Posterior vena cava (tissue), 2 donors: ENCODE measurements at regions of chr17 and their contacts with region 1.

Region 1: DNA sequence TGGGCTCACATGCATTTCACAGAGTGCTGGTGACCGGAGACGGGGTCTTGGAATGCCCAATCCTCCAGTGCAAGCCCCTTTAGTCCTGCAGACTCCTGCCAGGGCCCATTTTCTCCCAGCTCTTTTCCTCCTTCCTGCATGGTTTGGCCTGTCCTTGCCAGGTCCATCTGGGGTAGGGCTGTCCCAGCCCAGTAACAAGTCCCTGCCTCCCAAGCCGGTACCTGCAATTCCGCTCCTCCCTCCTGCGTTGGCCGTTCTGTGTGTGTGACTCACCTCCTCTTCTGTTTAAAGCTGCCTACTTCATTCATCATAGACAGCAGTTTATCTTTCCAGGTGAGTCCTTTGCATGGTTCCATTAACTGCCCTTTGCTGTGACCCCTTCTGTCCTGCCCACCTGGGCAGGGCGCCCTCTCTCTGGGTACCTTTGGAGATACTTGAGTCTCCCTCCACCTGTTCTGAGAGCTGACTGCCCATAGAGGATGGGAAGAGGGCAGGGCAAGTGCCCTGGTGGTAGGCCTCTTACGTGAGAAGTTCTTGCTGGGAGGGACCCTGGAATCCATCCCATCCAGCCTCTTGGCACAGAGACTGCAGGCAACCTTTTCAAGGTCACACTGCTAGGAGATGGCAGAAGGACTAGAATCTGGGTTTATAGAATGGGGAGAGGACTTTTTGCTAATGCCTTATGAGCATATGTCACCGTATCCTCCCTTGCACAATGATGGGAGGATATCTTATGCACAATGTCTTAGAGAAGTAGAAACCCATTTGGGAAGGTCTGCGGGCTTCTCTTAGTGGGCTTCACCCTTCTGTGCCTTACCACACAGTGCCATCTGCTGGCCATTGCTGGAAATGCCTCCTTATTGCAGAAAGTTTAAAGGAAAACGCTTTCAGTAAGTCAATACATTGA is 29.7 kb upstream of the LGALS9 start:
- DNase-seq: peak; percentile 88

Region 2: GRCh38 chr17:27236717-27237315 is 364.5 kb before region 1 on chr17:
- intact Hi-C with region 1: loop called (anchors 2 to 5 kb)
- DNase-seq: no peak

Region 3: GRCh38 chr17:27353461-27354050 is 247.8 kb before region 1 on chr17:
- intact Hi-C with region 1: loop called in 1 of 2 experiments (anchors 5 kb)
- DNase-seq: peak; percentile 98

Region 4: DNA sequence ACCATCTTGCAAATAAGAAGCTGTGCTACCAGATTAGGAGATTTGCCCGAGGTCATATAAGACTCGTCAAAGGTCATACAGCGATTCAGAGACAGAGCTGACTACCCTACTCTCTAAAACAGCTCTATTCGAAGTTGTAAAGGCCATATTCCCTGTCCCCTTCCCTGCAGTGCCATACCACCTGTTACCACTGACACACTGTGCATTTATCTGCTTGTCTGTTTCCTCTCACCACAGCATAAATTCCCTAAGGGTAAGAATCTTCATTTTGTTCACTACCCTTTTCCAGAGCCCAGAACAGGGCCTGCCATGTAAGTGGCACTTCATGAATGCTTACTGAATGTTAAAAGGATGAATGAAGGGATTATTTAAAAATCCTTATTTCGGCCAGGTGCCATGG is 148.5 kb before region 1 on chr17:
- intact Hi-C with region 1: no loop called
- DNase-seq: no peak

Region 5: DNA sequence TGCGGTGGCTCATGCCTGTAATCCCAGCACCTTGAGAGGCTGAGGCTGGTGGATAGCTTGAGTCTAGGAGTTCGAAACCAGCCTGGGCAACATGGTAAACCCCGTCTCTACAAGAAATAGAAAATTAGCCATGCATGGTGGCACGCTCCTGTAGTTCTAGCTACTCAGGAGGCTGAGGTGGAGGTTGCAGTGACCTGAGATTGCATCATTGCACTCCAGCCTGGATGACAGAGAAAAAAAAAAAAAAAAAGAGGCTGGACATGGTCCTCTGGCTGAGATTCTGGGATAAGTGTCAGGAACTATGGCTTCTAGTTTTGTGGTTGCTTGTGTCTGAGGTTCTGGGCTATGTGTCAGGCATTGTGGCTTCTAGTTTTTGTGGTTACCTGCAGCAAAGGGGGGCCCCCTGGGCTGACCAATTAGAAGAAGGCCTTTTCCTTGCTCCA is 138.1 kb before region 1 on chr17:
- intact Hi-C with region 1: loop called in 1 of 2 experiments (anchors 5 kb)
- DNase-seq: no peak

Region 6: GRCh38 chr17:27647765-27648164 is 46.4 kb after region 1 on chr17:
- intact Hi-C with region 1: loop called (anchors 1 to 5 kb)
- DNase-seq: no peak

Region 7: GRCh38 chr17:27654654-27655524 is 53.6 kb after region 1 on chr17:
- intact Hi-C with region 1: loop called in 1 of 2 experiments (anchors 5 kb)
- DNase-seq: peak; percentile 92